Activated T-helper 2 cell treated with anti-CD3 and anti-CD28 coated beads, Interferon-gamma antibody, Interleukin-2, Interleukin-4, amounts not matched to agents 10 μg/mL and 5 μg/mL and 100 μg/mL, durations not matched to agents 14 hours and 24 hours and 36 hours (primary cell): ENCODE measurements at regions of chr11 and their contacts with region 1.

Region 1: DNA sequence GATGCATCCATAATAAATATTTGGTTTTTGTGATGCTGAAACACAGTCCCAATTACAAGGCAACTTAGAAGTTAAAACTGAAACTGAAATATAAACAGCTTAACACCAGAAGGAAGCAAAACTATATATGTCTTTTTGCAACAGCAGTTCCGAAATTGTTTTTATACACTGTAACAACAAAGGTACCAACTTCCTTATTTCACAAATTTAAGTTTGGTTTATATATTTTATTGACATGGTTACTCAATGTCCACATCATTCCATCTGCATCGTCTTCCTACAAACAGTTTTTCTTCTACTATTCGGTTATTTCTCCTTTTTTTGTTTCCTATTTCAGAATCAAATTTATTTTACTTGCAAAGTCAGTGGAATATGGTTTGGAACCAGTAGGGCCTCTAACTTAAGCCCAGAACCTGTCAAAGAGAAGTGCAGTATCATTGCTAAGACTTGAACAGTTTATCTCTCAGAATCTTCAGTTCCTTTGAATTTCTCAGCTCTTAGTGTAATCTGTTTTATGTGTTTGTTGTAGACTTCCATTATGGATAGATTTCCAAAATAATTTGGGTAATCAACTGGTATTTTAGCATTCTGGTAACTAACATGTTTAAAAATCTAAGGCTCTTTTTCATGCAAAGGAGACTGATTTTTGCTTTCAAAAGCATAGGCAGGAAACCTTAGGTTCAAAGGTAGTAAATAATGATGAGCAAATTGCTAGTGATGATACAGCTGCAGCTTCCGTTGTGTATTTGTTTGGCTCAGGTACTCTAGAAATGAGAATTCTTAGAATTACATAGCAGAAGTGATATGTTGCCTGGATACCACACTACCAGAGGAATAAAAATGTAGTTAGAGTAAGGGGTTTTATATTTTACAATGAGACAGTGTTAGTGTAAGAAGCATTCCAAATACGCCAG is 8.2 kb upstream of the HSPA8 start:
- DNase-seq: no peak
- H3K4me3 Mint-ChIP-seq: peak overlapping the region; percentile 86
- H3K27ac Mint-ChIP-seq: peak overlapping the region; percentile 99
- H3K4me1 Mint-ChIP-seq: peaks cover 56% of the 10 kb centered on the region
- H3K27me3 Mint-ChIP-seq: no peaks in the 10 kb centered on the region

Region 2: GRCh38 chr11:123083623-123084029 is 13.5 kb after region 1 on chr11:
- intact Hi-C with region 1: loop called (anchors 1 kb)
- DNase-seq: peak; percentile 59
- H3K4me3 Mint-ChIP-seq: peak overlapping the region; percentile 66
- H3K27ac Mint-ChIP-seq: peak overlapping the region; percentile 82
- H3K4me1 Mint-ChIP-seq: peaks cover 47% of the 10 kb centered on the region
- H3K27me3 Mint-ChIP-seq: no peaks in the 10 kb centered on the region

Region 3: GRCh38 chr11:123272565-123272964 is 202.4 kb after region 1 on chr11:
- intact Hi-C with region 1: no loop called
- DNase-seq: no peak
- H3K4me3 Mint-ChIP-seq: no peak overlapping the region
- H3K27ac Mint-ChIP-seq: no peak overlapping the region
- H3K4me1 Mint-ChIP-seq: peaks cover 5% of the 10 kb centered on the region
- H3K27me3 Mint-ChIP-seq: peaks cover 9% of the 10 kb centered on the region

Region 4: DNA sequence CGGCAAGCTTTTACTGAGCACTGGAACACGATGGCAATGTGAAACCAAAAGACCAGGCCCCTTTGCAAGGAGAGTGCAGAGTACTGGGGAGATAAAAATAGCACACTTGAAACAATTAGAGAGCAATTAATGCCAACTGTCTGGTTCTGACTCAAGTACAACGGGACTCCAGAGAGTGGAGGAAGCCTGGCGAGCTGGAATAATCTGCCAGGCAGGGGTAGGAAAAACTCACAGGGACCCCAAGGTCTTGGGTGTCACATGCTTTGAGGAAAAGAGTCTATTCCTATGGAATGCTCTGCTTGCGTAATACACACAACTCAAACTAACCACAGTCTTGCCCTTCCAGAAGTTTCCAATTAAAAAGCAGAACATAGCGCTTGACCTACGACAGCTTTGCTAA is 237.9 kb after region 1 on chr11:
- intact Hi-C with region 1: no loop called
- DNase-seq: no peak
- H3K4me3 Mint-ChIP-seq: no peak overlapping the region
- H3K27ac Mint-ChIP-seq: no peak overlapping the region
- H3K4me1 Mint-ChIP-seq: peaks cover 25% of the 10 kb centered on the region
- H3K27me3 Mint-ChIP-seq: no peaks in the 10 kb centered on the region